IMR-90 (cell line): ENCODE measurements at regions of chr11 and their contacts with region 1.

Region 1: DNA sequence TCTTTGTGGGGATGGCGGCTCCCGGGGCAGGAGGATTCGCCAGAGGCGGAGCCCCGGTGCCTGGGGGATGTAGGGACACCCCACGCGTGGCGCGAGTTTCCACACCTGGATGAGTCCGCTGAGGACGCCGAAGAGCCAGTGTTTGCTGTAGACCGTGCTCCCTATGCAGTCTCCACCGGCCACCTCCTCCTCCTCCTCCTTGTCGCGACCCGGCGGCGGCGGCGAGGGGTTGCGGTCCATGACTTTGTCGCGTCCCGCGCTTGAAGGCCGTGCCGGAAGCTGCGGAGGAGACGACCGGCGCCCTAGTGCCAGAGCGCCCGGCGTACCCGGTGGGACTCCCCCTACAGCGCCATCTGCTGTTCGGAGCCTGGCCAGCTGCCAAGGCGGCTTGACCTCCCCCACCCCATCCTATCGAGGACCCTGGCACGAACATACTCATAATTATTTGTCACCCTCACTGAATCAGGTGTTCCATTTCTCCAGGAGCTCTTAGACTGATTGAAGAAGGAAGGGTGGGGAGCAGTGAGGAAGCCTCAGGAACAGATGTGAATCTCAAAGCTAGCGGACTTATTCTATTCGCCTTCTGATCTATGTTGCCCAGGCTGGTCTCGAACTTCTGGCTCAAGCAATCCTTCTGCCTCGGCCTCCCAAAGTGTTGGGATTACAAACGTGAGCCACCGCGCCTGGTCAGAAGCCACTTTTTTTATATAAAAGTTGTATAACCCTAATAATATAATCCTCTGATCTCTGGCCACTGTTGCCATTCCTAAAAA is at the start of gene SAAL1:
- DNase-seq: peak; percentile 67
- ATAC-seq: peak; percentile 99
- H3K4me3 ChIP-seq: peak within 1 kb of the TSS; percentile 88
- H3K27ac ChIP-seq: peak within 1 kb of the TSS; percentile 58; the same call in 1 of the 2 replicates
- H3K4me1 ChIP-seq: peaks cover 4% of the 10 kb centered on the region; the same call in 1 of the 2 replicates
- H3K27me3 ChIP-seq: peaks cover 1% of the 10 kb centered on the region; the same call in 1 of the 2 replicates
- CTCF ChIP-seq: peak; percentile 59
- POLR2A ChIP-seq: 0 out of 2 replicates have a peak, but pooled peaks have one; percentile 18
- RAD21 ChIP-seq: peak; percentile 33
- total RNA-seq, gene SAAL1: 12.5 and 21.1 TPM in 2 replicates

Region 2: DNA sequence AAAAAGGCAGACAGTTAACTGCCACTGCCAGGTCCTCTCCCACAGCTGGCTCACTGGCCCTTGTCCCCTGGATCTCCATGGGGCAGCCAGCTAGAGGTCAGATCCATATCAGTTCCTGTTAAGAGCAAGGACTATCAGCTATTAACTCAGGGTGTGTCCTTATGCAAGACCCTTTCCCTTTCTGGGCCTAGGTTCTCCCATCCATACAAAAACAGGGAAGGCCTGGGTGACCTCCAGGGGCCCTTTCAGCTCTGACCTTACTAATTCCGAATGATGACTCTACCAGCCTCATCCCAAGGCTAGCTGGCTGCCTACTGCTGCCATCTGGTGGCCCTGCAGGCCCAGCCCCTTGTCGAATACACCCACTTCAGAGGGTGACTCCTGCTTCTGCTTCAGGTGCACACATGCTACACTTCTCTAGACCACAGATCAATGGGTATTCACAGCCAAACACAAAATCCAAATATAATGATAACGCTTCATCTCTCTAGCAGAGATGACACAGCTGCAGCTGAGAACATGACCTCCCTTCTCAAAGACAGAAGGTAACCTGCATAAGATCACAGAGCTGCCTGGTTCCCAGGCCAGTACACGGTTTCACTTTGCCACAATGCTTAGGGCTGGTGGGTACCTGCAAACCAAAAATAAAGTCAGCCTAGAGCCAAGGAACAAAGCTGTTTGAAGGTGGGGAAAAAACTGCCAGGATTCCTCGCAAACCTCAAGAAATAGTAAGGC is 127.3 kb before region 1 on chr11:
- CTCF ChIA-PET with region 1: no interaction called
- POLR2A ChIA-PET with region 1: no interaction called
- dilution Hi-C with region 1: no loop called
- in situ Hi-C with region 1: no loop called
- intact Hi-C with region 1: no loop called
- DNase-seq: peak; percentile 53
- ATAC-seq: peak; percentile 96
- H3K4me3 ChIP-seq: no peak overlapping the region
- H3K27ac ChIP-seq: no peak overlapping the region
- H3K4me1 ChIP-seq: no peaks in the 10 kb centered on the region
- H3K27me3 ChIP-seq: no peaks in the 10 kb centered on the region
- CTCF ChIP-seq: peak; percentile 78
- POLR2A ChIP-seq: no peak
- RAD21 ChIP-seq: peak; percentile 80

Region 3: GRCh38 chr11:18012863-18013781 is 92.9 kb before region 1 on chr11 and contains the start of gene SERGEF:
- CTCF ChIA-PET with region 1: no interaction called
- POLR2A ChIA-PET with region 1: no interaction called
- dilution Hi-C with region 1: no loop called
- in situ Hi-C with region 1: no loop called
- intact Hi-C with region 1: loop called (anchors 5 kb)
- DNase-seq: peak; percentile 84
- ATAC-seq: peak; percentile 97
- H3K4me3 ChIP-seq: peak within 1 kb of the TSS; percentile 92
- H3K27ac ChIP-seq: peak within 1 kb of the TSS; percentile 46; the same call in 1 of the 2 replicates
- H3K4me1 ChIP-seq: peaks cover 4% of the 10 kb centered on the region
- H3K27me3 ChIP-seq: peaks cover 4% of the 10 kb centered on the region; the same call in 1 of the 2 replicates
- CTCF ChIP-seq: no peak
- POLR2A ChIP-seq: no peak
- RAD21 ChIP-seq: no peak
- total RNA-seq, gene SERGEF: 18.1 and 19.4 TPM in 2 replicates